Heart left ventricle (tissue), 16 donors: ENCODE measurements at regions of chr4 and their contacts with region 1.

Region 1: DNA sequence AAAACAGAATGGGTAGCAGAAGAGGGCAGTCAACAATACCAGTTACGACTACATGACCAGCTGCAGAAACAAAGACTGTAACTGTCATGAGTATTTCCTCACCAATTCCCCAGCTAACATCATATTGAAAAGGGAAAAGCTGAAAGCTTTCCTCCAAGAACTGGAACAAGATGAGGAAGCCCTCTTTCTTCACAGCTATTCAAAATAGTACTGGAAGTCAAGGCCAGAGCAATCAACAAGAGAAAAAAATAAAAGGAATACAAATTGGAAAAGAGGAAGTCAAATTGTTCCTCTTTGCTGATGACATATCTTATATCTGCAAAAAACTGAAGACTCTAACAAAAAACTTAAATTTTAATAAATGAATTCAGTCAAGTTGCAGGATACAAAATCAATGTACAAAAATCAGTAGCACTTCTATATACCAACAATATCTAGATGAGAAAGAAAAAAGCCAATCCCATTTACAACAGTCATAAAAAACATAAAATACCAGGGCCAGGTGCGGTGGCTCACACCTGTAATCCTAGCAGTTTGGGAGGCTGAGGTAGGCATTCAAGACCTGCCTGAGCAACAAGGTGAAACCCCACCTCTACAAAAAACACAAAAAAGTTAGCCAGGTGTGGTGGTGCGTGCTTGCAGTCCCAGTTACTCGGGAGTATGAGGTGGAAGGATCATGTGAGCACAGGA is 125.4 kb downstream of the ATP8A1 start:
- DNase-seq: no peak
- ATAC-seq: no peak
- H3K4me3 ChIP-seq: no peak overlapping the region
- H3K27ac ChIP-seq: no peak overlapping the region
- H3K4me1 ChIP-seq: no peaks in the 10 kb centered on the region
- H3K27me3 ChIP-seq: no peaks in the 10 kb centered on the region
- CTCF ChIP-seq: no peak
- POLR2A ChIP-seq: no peak

Region 2: GRCh38 chr4:42501624-42502401 is 29.7 kb before region 1 on chr4:
- intact Hi-C with region 1: loop called in 1 of 10 experiments (anchors 2 kb)
- DNase-seq: no peak
- ATAC-seq: no peak
- H3K4me3 ChIP-seq: no peak overlapping the region
- H3K27ac ChIP-seq: no peak overlapping the region
- H3K4me1 ChIP-seq: no peaks in the 10 kb centered on the region
- H3K27me3 ChIP-seq: no peaks in the 10 kb centered on the region
- CTCF ChIP-seq: no peak
- POLR2A ChIP-seq: no peak